ENCODE measurements at regions of chr1 and their contacts with region 1.

Region 1: DNA sequence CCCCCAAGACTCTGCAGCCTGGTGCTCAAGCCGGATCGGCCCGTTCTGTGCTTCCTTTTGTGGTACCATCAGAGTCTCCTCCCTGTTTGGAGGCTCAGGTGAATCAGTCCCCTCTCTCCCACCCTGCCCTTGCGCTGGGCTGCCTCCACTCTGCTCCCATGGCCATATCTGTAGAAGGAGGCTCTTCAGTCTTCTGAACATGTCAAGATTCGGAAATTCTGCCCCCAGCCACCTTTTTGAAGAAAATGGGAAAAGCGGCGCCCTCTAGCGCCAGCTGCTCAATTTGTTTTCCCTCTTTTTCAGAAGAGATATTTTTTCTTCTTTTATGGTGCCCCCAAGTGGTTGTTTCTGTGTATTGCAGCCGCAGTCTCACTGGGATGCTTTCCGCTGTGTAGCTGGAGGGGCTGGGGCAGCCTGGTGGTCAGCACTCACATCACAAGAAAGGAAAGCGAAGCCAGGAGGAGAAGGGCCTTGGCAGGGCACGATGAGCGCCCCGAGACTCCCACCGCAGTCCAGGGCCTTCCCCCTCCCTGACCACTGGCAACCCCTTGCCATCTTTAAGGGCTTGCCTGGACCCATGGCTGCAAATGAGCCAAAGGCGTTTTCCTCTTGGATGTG is 58.4 kb upstream of the CACNA1E start:
- H3K4me3 ChIP-seq: no peak overlapping the region
- H3K27ac ChIP-seq: no peak overlapping the region
- H3K4me1 ChIP-seq: no peaks in the 10 kb centered on the region
- CTCF ChIP-seq: peak; percentile 93

Region 2: DNA sequence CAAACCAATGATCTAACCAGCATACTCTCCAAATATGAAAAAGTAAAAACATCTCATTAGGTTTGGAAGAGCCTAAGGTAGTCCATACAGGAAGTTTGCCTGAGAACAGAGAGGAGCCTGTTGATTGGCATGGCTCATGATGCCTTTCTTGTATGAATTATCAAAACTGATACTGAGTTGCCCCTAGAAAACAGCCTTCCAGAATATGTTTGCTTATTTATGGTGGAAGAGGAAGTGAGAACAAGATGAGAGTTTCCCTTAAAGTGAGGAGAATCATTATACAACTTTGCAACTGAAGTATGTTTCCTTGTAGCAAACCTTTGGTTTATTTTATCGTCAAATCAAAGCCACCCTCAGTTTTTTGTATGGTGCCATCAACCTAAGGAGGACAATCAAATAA is 536.0 kb before region 1 on chr1:
- CTCF ChIA-PET with region 1: interaction called, 10 read pairs
- POLR2A ChIA-PET with region 1: no interaction called
- H3K4me3 ChIP-seq: no peak overlapping the region
- H3K27ac ChIP-seq: no peak overlapping the region
- H3K4me1 ChIP-seq: no peaks in the 10 kb centered on the region
- CTCF ChIP-seq: no peak

Region 3: DNA sequence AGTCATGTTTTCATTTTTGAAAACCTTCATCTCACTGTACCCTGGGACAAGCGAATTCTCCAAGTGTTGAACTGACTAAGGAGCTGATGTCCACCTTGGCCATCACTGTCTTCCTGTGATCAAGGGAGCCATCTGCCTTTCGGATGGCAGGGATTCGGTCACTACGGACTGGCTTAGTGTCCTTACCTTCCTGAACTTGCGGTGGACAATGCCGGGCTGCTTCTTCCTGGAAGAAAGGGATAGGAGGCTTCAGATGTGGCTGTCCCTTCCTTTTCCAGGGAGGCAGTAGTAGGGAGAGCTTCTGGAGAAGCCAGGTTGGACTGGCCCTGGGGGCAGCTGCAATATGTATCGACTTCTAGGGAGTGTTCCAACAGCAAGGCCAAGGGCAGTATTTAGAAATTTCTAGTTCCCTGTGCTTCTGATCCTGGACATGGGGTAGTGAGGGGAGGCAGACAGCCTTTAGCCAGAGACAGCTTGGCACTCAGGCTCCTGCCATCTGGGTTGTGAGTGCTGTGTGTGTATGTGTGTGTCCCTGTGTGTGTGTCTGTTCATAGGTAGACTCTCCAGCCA is 221.8 kb before region 1 on chr1:
- CTCF ChIA-PET with region 1: interaction called, 11 read pairs
- POLR2A ChIA-PET with region 1: no interaction called
- H3K4me3 ChIP-seq: no peak overlapping the region
- H3K27ac ChIP-seq: no peak overlapping the region
- H3K4me1 ChIP-seq: no peaks in the 10 kb centered on the region
- CTCF ChIP-seq: no peak